Activated T-helper 2 cell treated with anti-CD3 and anti-CD28 coated beads, Interferon-gamma antibody, Interleukin-2, Interleukin-4, amounts not matched to agents 10 μg/mL and 5 μg/mL and 100 μg/mL, durations not matched to agents 14 hours and 24 hours and 36 hours (primary cell): ENCODE measurements at regions of chr16 and their contacts with region 1.

Region 1: DNA sequence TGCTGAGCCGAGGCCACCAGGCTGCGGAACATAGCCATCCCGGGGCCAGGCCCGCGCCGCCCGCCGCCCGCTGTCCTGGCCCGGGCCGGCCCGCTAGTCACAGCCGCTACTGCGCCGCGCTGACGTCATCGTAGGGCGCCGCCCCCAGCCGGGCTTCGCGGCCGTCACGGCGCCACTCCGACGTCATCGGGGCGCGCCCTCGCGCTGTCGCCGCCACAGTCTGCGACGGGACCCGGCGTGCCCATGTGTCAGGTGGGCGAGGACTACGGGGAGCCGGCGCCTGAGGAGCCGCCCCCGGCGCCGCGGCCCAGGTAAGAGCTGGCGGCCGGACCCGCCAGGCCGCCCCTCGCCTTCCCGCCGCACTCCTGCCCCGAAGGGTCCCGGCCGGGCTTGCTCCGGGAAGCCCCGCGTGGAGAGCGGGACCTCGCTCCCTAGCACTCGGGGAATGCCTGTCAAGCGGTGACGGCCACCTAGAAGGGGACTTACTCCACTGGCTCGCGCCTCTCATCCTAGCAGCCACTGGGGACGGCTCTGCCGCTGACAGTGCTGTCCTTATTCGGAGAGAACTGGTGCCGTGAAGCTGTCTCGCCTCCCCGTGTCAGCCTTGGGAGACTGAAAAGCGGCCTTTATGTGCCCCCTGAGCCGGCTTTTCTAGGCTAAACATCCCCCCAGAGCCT is at the starts of genes CTU2 and RNF166:
- DNase-seq: peak; percentile 89
- H3K4me3 Mint-ChIP-seq: peak within 1 kb of the TSS; percentile 87
- H3K27ac Mint-ChIP-seq: peak within 1 kb of the TSS; percentile 67
- H3K4me1 Mint-ChIP-seq: peaks cover 41% of the 10 kb centered on the region
- H3K27me3 Mint-ChIP-seq: no peaks in the 10 kb centered on the region
- total RNA-seq, gene CTU2: 43.8 and 43.9 TPM in 2 replicates
- total RNA-seq, gene RNF166: 39.9 and 52.1 TPM in 2 replicates

Region 2: GRCh38 chr16:88737298-88738150 is 31.1 kb after region 1 on chr16:
- intact Hi-C with region 1: loop called (anchors 2 kb)
- DNase-seq: peak; percentile 54
- H3K4me3 Mint-ChIP-seq: no peak overlapping the region
- H3K27ac Mint-ChIP-seq: no peak overlapping the region
- H3K4me1 Mint-ChIP-seq: no peaks in the 10 kb centered on the region
- H3K27me3 Mint-ChIP-seq: no peaks in the 10 kb centered on the region